Activated T-helper 1 cell treated with anti-CD3 and anti-CD28 coated beads, Interleukin-12 subunit alpha, Interleukin-12 subunit beta, Interleukin-2, Interleukin-4 antibody, amounts not matched to agents 30 ng/mL and 10 ng/mL and 1 ng/mL, durations not matched to agents 14 hours and 24 hours and 36 hours (primary cell): ENCODE measurements at regions of chr2 and their contacts with region 1.

Region 1: GRCh38 chr2:234288974-234289455 is 207.9 kb downstream of the ARL4C start:
- DNase-seq: peak; percentile 69
- H3K4me3 Mint-ChIP-seq: peak overlapping the region; percentile 80
- H3K27ac Mint-ChIP-seq: peak overlapping the region; percentile 99
- H3K4me1 Mint-ChIP-seq: peaks cover 91% of the 10 kb centered on the region
- H3K27me3 Mint-ChIP-seq: no peaks in the 10 kb centered on the region

Region 2: DNA sequence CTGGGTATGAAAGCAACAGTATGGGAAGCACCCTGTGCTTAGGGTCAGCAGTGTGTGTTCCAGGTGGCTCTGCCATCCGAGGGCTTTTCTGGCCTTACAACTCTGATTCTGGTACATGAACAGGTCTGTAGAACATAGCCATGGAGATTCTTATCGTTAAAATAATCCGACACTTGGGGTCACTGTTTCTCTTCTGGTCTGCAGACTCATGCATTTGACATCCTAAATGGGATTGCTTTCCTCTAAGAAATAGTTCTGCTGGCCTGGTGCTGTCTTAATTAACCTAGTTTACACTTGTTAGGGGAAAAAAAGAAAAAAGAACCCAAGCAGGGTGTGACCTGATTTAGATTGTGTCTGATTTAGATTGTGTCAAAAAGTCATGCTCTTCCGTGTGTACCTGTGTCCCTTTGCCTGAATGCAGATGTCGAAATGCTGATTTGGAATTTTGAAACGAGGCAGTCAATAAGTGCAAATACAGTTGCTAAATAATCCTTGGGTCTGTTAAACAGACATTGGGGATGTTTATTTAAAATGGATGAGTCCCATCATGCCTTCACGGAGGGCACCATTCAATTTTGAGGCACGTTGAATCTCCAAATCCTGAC is 312.2 kb before region 1 on chr2:
- intact Hi-C with region 1: loop called (anchors 5 kb)
- DNase-seq: peak; percentile 12
- H3K4me3 Mint-ChIP-seq: no peak overlapping the region
- H3K27ac Mint-ChIP-seq: no peak overlapping the region
- H3K4me1 Mint-ChIP-seq: peaks cover 39% of the 10 kb centered on the region
- H3K27me3 Mint-ChIP-seq: peaks cover 10% of the 10 kb centered on the region

Region 3: GRCh38 chr2:234038076-234038802 is 250.8 kb before region 1 on chr2:
- intact Hi-C with region 1: no loop called
- DNase-seq: no peak
- H3K4me3 Mint-ChIP-seq: no peak overlapping the region
- H3K27ac Mint-ChIP-seq: no peak overlapping the region
- H3K4me1 Mint-ChIP-seq: no peaks in the 10 kb centered on the region
- H3K27me3 Mint-ChIP-seq: peaks cover 35% of the 10 kb centered on the region

Region 4: DNA sequence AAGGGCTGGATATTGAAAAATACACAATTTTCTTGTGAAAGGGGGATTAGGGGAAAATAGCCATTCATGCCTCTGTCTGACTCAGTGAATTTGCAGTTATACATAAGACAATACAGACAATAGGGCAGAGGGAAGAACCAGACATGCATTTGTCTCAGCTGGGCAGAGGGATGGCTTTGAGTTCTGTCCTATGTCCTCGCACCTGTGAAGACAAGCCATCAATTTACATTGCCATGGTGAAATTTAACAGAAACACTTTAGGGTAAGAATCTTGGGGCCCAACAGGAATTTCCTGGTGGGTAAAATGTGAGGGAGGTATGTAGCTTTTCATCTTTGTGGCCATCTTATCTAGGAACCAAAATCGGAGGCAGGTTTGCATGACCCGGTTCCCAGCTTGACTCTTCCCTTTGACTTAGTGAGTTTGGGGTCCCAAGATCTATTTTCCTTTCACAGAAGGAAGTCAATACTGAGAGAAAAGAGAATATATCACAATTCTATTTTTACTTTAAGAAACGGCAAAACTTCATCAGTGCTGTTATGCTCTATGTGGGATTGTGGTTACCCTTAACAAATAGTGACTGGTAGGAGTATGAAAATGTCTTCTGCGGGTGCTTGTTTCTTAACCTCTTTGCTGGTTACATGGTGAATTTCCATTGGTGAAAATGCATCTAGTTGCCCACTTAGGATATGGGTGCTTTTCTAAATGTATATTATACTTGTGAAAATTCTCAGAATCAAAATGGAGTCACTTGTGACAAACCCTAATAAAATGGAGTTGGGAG is 16.8 kb before region 1 on chr2:
- intact Hi-C with region 1: loop called (anchors 1 kb)
- DNase-seq: no peak
- H3K4me3 Mint-ChIP-seq: peak overlapping the region; percentile 40
- H3K27ac Mint-ChIP-seq: peak overlapping the region; percentile 85
- H3K4me1 Mint-ChIP-seq: peaks cover 80% of the 10 kb centered on the region
- H3K27me3 Mint-ChIP-seq: no peaks in the 10 kb centered on the region

Region 5: DNA sequence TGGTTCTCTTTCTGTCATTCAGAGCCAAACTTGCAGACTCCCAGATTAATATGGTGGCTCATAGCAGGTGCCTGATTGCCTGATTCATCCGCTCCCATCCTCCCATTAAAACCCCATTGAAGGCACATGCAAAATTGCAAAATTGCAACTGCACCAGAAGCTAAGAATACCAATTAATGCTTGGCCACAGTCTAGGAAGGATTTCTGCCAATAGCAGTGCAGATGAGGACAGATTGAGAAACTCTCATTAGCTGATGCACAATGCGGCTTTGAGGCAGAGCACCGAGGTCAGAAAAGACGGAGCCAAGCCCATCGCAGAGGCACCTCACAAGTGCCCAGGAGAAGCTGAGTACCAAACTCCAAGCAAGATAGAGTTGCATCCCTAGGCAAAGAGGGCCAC is 35.1 kb after region 1 on chr2:
- intact Hi-C with region 1: loop called (anchors 1 kb)
- DNase-seq: no peak
- H3K4me3 Mint-ChIP-seq: no peak overlapping the region
- H3K27ac Mint-ChIP-seq: peak overlapping the region; percentile 93
- H3K4me1 Mint-ChIP-seq: peaks cover 52% of the 10 kb centered on the region
- H3K27me3 Mint-ChIP-seq: no peaks in the 10 kb centered on the region

Region 6: GRCh38 chr2:234446404-234447076 is 157.5 kb after region 1 on chr2:
- intact Hi-C with region 1: loop called (anchors 1 kb)
- DNase-seq: peak; percentile 87
- H3K4me3 Mint-ChIP-seq: peak overlapping the region; percentile 75
- H3K27ac Mint-ChIP-seq: peak overlapping the region; percentile 99
- H3K4me1 Mint-ChIP-seq: peaks cover 88% of the 10 kb centered on the region
- H3K27me3 Mint-ChIP-seq: no peaks in the 10 kb centered on the region

Region 7: GRCh38 chr2:234488913-234489451 is 200.0 kb after region 1 on chr2:
- intact Hi-C with region 1: loop called (anchors 1 kb)
- DNase-seq: peak; percentile 80
- H3K4me3 Mint-ChIP-seq: peak overlapping the region; percentile 88
- H3K27ac Mint-ChIP-seq: peak overlapping the region; percentile 95
- H3K4me1 Mint-ChIP-seq: peaks cover 92% of the 10 kb centered on the region
- H3K27me3 Mint-ChIP-seq: no peaks in the 10 kb centered on the region

Region 8: GRCh38 chr2:234632527-234633391 is 343.7 kb after region 1 on chr2:
- intact Hi-C with region 1: no loop called
- DNase-seq: no peak
- H3K4me3 Mint-ChIP-seq: no peak overlapping the region
- H3K27ac Mint-ChIP-seq: no peak overlapping the region
- H3K4me1 Mint-ChIP-seq: no peaks in the 10 kb centered on the region
- H3K27me3 Mint-ChIP-seq: peaks cover 7% of the 10 kb centered on the region